Caco-2 (cell line): ENCODE measurements at regions of chr13 and their contacts with region 1.

Region 1: DNA sequence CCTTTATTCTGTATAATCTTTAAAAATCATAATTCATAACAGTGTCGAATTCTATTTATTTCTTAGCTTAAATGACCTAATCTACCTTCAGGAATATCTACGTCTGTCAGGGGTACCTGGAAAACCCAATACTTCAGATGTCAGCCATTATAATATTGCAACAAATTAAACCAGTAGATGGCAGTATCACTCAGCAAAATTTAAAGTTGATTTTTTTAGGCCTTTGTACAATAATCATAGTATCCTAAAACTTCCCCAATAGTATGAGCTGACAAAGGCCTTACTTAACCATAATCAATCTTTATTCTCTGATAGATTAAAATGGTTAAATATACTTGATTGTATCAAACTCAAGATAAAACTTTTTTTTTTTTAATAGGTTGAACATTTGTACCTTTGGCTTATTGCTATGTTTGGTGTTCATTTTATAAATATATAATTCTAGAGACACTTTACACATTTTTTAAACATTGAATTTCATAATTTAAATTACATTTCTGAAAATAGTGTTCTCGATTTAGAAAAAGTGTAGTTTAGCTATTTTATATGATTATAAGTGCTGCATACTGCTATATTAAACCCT is 830.2 kb upstream of the SPRY2 start:
- DNase-seq: peak in 1 of 2 experiments; percentile 25
- H3K4me3 ChIP-seq: no peak overlapping the region
- H3K4me3 Mint-ChIP-seq: no peak overlapping the region
- H3K27ac Mint-ChIP-seq: no peak overlapping the region
- H3K4me1 ChIP-seq: no peaks in the 10 kb centered on the region; the same call in 1 of the 2 replicates
- H3K4me1 Mint-ChIP-seq: no peaks in the 10 kb centered on the region
- H3K27me3 ChIP-seq: no peaks in the 10 kb centered on the region
- H3K27me3 Mint-ChIP-seq: no peaks in the 10 kb centered on the region
- CTCF ChIP-seq: peak; percentile 51 to 72

Region 2: GRCh38 chr13:81184556-81185265 is 13.6 kb after region 1 on chr13:
- CTCF ChIA-PET with region 1: no interaction called
- POLR2A ChIA-PET with region 1: no interaction called
- intact Hi-C with region 1: loop called (anchors 1 kb)
- DNase-seq: peak; percentile 67 to 69
- H3K4me3 ChIP-seq: no peak overlapping the region
- H3K4me3 Mint-ChIP-seq: peak overlapping the region; percentile 14
- H3K27ac Mint-ChIP-seq: peak overlapping the region; percentile 31
- H3K4me1 ChIP-seq: peaks cover 37% of the 10 kb centered on the region
- H3K4me1 Mint-ChIP-seq: peaks cover 30% of the 10 kb centered on the region
- H3K27me3 ChIP-seq: no peaks in the 10 kb centered on the region
- H3K27me3 Mint-ChIP-seq: no peaks in the 10 kb centered on the region
- CTCF ChIP-seq: no peak

Region 3: DNA sequence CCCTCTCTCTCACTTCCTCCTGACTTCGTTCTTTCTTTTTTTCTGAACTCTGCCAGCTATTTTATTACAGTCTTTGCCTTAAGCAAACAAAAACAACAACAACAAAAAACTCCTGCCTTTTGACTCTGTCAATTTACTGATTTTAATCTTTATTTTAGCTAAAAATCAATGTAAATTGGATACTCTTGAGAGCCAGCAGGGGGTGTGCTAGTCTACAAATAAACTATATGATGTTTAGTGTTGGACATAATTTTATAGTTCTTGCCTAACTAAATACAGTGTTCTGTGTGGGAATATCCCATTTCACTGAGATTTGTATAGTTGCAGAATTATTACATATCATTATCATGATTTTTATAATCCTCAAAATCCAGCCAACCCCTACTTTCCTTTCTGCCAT is 369.6 kb after region 1 on chr13:
- CTCF ChIA-PET with region 1: no interaction called
- POLR2A ChIA-PET with region 1: no interaction called
- intact Hi-C with region 1: loop called (anchors 5 kb)
- DNase-seq: no peak
- H3K4me3 ChIP-seq: no peak overlapping the region
- H3K4me3 Mint-ChIP-seq: no peak overlapping the region
- H3K27ac Mint-ChIP-seq: no peak overlapping the region
- H3K4me1 ChIP-seq: no peaks in the 10 kb centered on the region
- H3K4me1 Mint-ChIP-seq: no peaks in the 10 kb centered on the region
- H3K27me3 ChIP-seq: no peaks in the 10 kb centered on the region
- H3K27me3 Mint-ChIP-seq: no peaks in the 10 kb centered on the region
- CTCF ChIP-seq: peak in 1 of 2 experiments; percentile 26

Region 4: DNA sequence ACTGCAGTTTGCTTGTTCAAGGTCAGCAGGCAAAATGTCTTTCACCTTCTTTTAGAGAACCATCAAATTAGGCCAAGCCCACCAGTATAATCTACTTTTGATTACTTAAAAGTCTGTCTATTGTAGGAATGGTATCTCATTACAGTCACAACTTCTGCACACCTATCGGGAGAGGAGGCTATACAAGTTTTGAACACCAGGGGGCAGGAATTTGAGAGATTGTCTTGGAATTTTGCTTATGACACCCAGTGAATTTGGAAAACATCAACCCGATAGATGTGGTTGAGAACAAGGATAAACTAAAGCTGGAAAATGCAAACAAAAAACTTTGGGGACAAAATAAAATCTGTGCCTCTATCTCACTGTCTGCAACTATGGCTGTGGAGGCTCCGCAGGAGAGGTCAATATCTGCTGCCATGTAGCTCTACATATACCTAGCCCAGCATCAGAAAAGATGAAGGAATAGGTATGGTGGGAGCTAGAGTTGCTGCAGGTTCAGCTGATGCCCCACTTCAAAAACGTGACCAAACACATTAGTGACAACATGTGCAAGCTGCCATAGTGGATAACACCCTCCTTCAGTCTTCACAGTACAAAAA is 468.9 kb after region 1 on chr13:
- CTCF ChIA-PET with region 1: no interaction called
- POLR2A ChIA-PET with region 1: no interaction called
- intact Hi-C with region 1: loop called (anchors 5 kb)
- DNase-seq: peak; percentile 38 to 64
- H3K4me3 ChIP-seq: no peak overlapping the region
- H3K4me3 Mint-ChIP-seq: no peak overlapping the region
- H3K27ac Mint-ChIP-seq: no peak overlapping the region
- H3K4me1 ChIP-seq: no peaks in the 10 kb centered on the region
- H3K4me1 Mint-ChIP-seq: no peaks in the 10 kb centered on the region
- H3K27me3 ChIP-seq: no peaks in the 10 kb centered on the region
- H3K27me3 Mint-ChIP-seq: no peaks in the 10 kb centered on the region
- CTCF ChIP-seq: peak; percentile 71 to 73